Mammary epithelial cell (primary cell): ENCODE measurements at regions of chr6 and their contacts with region 1.

Region 1: GRCh38 chr6:53956068-53956711 is 155.1 kb upstream of the MLIP start:
- DNase-seq: peak; percentile 54
- H3K4me3 ChIP-seq: no peak overlapping the region
- H3K27ac ChIP-seq: no peak overlapping the region
- H3K4me1 ChIP-seq: no peaks in the 10 kb centered on the region
- H3K27me3 ChIP-seq: no peaks in the 10 kb centered on the region
- CTCF ChIP-seq: peak; percentile 54 to 82

Region 2: GRCh38 chr6:53718597-53719460 is 237.4 kb before region 1 on chr6:
- CTCF ChIA-PET with region 1: interaction called, 15 read pairs
- dilution Hi-C with region 1: no loop called
- in situ Hi-C with region 1: loop called in 1 of 2 experiments (anchors 10 kb)
- intact Hi-C with region 1: loop called (anchors 1 kb)
- DNase-seq: peak; percentile 59
- H3K4me3 ChIP-seq: no peak overlapping the region
- H3K27ac ChIP-seq: no peak overlapping the region
- H3K4me1 ChIP-seq: no peaks in the 10 kb centered on the region
- H3K27me3 ChIP-seq: no peaks in the 10 kb centered on the region
- CTCF ChIP-seq: peak; percentile 80 to 92

Region 3: GRCh38 chr6:53725791-53726431 is 230.3 kb before region 1 on chr6:
- CTCF ChIA-PET with region 1: interaction called, 14 read pairs
- dilution Hi-C with region 1: no loop called
- in situ Hi-C with region 1: loop called in 1 of 2 experiments (anchors 10 kb)
- intact Hi-C with region 1: loop called (anchors 1 kb)
- DNase-seq: peak; percentile 48
- H3K4me3 ChIP-seq: no peak overlapping the region
- H3K27ac ChIP-seq: no peak overlapping the region
- H3K4me1 ChIP-seq: peaks cover 3% of the 10 kb centered on the region
- H3K27me3 ChIP-seq: no peaks in the 10 kb centered on the region
- CTCF ChIP-seq: peak; percentile 98 to 99

Region 4: GRCh38 chr6:53794720-53795253 is 161.4 kb before region 1 on chr6 and contains the start of gene LRRC1:
- CTCF ChIA-PET with region 1: interaction called, 30 read pairs
- dilution Hi-C with region 1: no loop called
- in situ Hi-C with region 1: no loop called
- intact Hi-C with region 1: loop called (anchors 1 kb)
- DNase-seq: peak; percentile 89
- H3K4me3 ChIP-seq: peak within 1 kb of the TSS; percentile 89 to 97 (median 93)
- H3K27ac ChIP-seq: peak within 1 kb of the TSS; percentile 77
- H3K4me1 ChIP-seq: peaks cover 31% of the 10 kb centered on the region
- H3K27me3 ChIP-seq: no peaks in the 10 kb centered on the region
- CTCF ChIP-seq: no peak
- total RNA-seq, gene LRRC1: 18.2 to 19.2 TPM

Region 5: DNA sequence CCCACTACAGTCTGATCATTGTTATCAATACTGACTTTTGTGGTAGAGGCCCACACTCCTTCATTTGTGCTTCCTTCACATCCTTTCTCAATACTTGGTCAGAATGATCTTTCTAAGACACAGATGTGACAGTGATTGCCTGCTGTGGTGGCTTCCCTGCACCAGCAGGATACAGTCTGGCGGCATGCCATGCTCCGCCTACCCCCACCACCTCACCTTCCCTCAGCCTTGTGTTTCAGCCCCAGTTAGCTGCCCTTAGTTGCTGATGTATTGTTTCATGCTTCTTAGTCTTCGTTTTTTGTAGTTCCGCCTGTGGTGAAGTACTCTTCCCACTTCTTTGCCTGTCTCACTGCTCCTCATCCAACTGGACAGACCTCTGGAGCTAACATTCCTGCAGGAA is 150.5 kb before region 1 on chr6:
- CTCF ChIA-PET with region 1: no interaction called
- dilution Hi-C with region 1: no loop called
- in situ Hi-C with region 1: loop called in 1 of 2 experiments (anchors 10 kb)
- intact Hi-C with region 1: no loop called
- DNase-seq: no peak
- H3K4me3 ChIP-seq: no peak overlapping the region
- H3K27ac ChIP-seq: no peak overlapping the region
- H3K4me1 ChIP-seq: peaks cover 16% of the 10 kb centered on the region
- H3K27me3 ChIP-seq: no peaks in the 10 kb centered on the region
- CTCF ChIP-seq: no peak

Region 6: DNA sequence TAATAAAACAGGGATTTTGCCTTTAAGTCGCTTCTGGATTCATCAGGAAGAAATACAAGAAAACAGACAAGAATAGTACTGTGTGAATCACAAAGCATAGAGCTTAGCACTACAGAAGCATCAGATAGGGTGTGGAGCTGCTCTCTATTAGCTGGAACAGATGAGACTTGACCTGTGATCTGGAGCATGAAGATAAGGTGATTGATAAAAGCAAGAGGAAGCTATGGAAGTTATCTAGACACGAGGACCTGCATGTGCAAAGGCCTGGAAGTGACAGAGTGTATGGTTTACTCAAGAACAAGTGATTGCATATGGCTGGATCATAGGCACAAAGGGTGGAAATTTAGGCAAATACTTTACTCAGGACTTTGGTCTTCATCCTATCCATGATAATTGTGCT is 42.1 kb after region 1 on chr6:
- CTCF ChIA-PET with region 1: no interaction called
- dilution Hi-C with region 1: no loop called
- in situ Hi-C with region 1: no loop called
- intact Hi-C with region 1: no loop called
- DNase-seq: no peak
- H3K4me3 ChIP-seq: no peak overlapping the region
- H3K27ac ChIP-seq: no peak overlapping the region
- H3K4me1 ChIP-seq: peaks cover 14% of the 10 kb centered on the region
- H3K27me3 ChIP-seq: no peaks in the 10 kb centered on the region
- CTCF ChIP-seq: no peak

Region 7: DNA sequence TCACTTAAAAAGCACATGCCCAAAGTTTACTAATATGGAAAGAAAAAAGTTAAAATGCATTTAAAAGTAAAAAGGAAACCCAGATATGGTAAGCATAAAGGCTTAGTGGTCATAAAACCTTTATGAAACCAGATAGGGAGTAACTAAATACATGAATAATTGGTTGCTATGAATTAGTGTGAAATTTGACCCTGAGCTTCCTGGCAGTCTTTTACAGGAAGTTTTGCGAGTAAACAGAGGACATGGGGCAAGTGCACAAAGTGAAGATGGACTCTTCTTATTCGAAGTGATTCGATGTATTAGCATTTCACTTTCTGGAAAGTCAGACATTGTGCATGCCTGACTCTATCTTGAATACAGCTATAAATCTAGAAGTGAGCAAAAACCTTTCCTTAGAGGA is 64.1 kb after region 1 on chr6:
- CTCF ChIA-PET with region 1: no interaction called
- dilution Hi-C with region 1: no loop called
- in situ Hi-C with region 1: no loop called
- intact Hi-C with region 1: no loop called
- DNase-seq: no peak
- H3K4me3 ChIP-seq: no peak overlapping the region
- H3K27ac ChIP-seq: no peak overlapping the region
- H3K4me1 ChIP-seq: no peaks in the 10 kb centered on the region
- H3K27me3 ChIP-seq: no peaks in the 10 kb centered on the region
- CTCF ChIP-seq: no peak